ENCODE measurements at regions of chr10 and their contacts with region 1.

Region 1: GRCh38 chr10:6721480-6721879 is 141.4 kb upstream of the PRKCQ start:
- DNase-seq: peak; percentile 93
- H3K4me3 ChIP-seq: no peak overlapping the region
- H3K27ac ChIP-seq: peak overlapping the region; percentile 59
- H3K4me1 ChIP-seq: peaks cover 27% of the 10 kb centered on the region
- H3K27me3 ChIP-seq: no peaks in the 10 kb centered on the region
- CTCF ChIP-seq: peak; percentile 55

Region 2: GRCh38 chr10:6748978-6749635 is 27.6 kb after region 1 on chr10:
- CTCF ChIA-PET with region 1: no interaction called
- POLR2A ChIA-PET with region 1: no interaction called
- intact Hi-C with region 1: loop called (anchors 1 kb)
- DNase-seq: peak; percentile 96
- H3K4me3 ChIP-seq: no peak overlapping the region
- H3K27ac ChIP-seq: peak overlapping the region; percentile 85
- H3K4me1 ChIP-seq: peaks cover 52% of the 10 kb centered on the region
- H3K27me3 ChIP-seq: no peaks in the 10 kb centered on the region
- CTCF ChIP-seq: no peak

Region 3: GRCh38 chr10:6781133-6781770 is 59.8 kb after region 1 on chr10:
- CTCF ChIA-PET with region 1: no interaction called
- POLR2A ChIA-PET with region 1: no interaction called
- intact Hi-C with region 1: loop called (anchors 5 kb)
- DNase-seq: no peak
- H3K4me3 ChIP-seq: no peak overlapping the region
- H3K27ac ChIP-seq: no peak overlapping the region
- H3K4me1 ChIP-seq: peaks cover 8% of the 10 kb centered on the region
- H3K27me3 ChIP-seq: no peaks in the 10 kb centered on the region
- CTCF ChIP-seq: no peak

Measured in A673 (cell line).